Stomach (tissue), 19 donors: ENCODE measurements at regions of chr17 and their contacts with region 1.

Region 1: GRCh38 chr17:31015639-31016038 is 44.8 kb downstream of the RNF135 start:
- DNase-seq: no peak
- H3K4me3 ChIP-seq: no peak overlapping the region
- H3K27ac ChIP-seq: no peak overlapping the region
- H3K4me1 ChIP-seq: peaks cover 0 to 5% (median 0%) of the 10 kb centered on the region in 4 donors
- H3K27me3 ChIP-seq: no peaks in the 10 kb centered on the region
- CTCF ChIP-seq: no peak
- EP300 ChIP-seq: no peak
- POLR2A ChIP-seq: no peak

Region 2: GRCh38 chr17:30482555-30482954 is 533.1 kb before region 1 on chr17:
- intact Hi-C with region 1: no loop called
- DNase-seq: no peak
- H3K4me3 ChIP-seq: no peak overlapping the region
- H3K27ac ChIP-seq: no peak overlapping the region
- H3K4me1 ChIP-seq: peaks cover 6 to 28% (median 20%) of the 10 kb centered on the region in 4 donors
- H3K27me3 ChIP-seq: no peaks in the 10 kb centered on the region
- CTCF ChIP-seq: no peak
- EP300 ChIP-seq: no peak
- POLR2A ChIP-seq: no peak

Region 3: GRCh38 chr17:30970831-30971567 is 44.6 kb before region 1 on chr17 and contains the start of gene RNF135:
- intact Hi-C with region 1: no loop called
- DNase-seq: peak; percentile 85 to 93
- H3K4me3 ChIP-seq: peak within 1 kb of the TSS; percentile 57 to 82 (median 68)
- H3K27ac ChIP-seq: peak within 1 kb of the TSS; percentile 92 to 99 (median 97)
- H3K4me1 ChIP-seq: peaks cover 18 to 36% (median 24%) of the 10 kb centered on the region in 4 donors
- H3K27me3 ChIP-seq: no peaks in the 10 kb centered on the region
- CTCF ChIP-seq: peak in 4 of 7 experiments; percentile 24 to 59 (median 38)
- EP300 ChIP-seq: no peak
- POLR2A ChIP-seq: peak in 1 of 4 donors; percentile 35
- total RNA-seq, gene RNF135: 1.8 to 18.7 (median 7.0) TPM

Region 4: DNA sequence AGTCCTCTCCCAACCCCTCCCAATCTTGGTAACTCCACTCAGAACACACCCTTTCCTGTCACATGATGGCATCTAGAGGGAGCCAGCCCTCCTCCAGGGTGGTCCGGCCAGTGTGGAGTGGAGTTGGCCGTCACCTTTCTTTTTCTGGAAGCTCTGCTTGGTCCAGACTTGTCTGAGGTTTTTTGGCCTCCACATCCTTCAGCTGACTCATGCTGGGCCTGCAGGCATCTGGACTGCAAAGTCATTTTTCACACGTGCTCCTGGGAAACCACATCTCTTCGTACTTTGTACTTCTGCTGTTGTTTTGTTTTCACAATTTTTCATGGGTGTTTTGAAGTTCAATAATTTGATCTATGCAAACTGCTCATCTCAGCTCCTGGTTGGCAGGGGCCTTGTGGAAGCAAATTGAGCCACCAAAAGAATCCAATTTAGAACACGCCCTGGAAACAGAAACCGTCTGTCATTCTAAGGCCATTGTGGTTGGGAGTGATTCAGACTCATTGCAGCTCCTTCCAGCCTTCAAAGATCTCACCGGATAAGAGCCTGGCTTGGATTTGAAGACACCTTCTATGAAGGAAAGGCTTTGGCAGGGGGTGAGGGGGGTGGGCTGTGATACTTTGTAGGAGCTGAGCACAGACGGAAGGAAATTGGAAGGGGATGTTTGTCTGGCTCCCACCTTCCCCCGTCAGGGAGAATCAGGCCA is 36.7 kb after region 1 on chr17:
- intact Hi-C with region 1: no loop called
- DNase-seq: peak in 1 of 2 donors; percentile 32
- H3K4me3 ChIP-seq: no peak overlapping the region
- H3K27ac ChIP-seq: peak overlapping the region in 1 of 5 donors; percentile 42
- H3K4me1 ChIP-seq: peaks cover 0 to 15% (median 0%) of the 10 kb centered on the region in 4 donors
- H3K27me3 ChIP-seq: no peaks in the 10 kb centered on the region
- CTCF ChIP-seq: no peak
- EP300 ChIP-seq: no peak
- POLR2A ChIP-seq: no peak

Region 5: DNA sequence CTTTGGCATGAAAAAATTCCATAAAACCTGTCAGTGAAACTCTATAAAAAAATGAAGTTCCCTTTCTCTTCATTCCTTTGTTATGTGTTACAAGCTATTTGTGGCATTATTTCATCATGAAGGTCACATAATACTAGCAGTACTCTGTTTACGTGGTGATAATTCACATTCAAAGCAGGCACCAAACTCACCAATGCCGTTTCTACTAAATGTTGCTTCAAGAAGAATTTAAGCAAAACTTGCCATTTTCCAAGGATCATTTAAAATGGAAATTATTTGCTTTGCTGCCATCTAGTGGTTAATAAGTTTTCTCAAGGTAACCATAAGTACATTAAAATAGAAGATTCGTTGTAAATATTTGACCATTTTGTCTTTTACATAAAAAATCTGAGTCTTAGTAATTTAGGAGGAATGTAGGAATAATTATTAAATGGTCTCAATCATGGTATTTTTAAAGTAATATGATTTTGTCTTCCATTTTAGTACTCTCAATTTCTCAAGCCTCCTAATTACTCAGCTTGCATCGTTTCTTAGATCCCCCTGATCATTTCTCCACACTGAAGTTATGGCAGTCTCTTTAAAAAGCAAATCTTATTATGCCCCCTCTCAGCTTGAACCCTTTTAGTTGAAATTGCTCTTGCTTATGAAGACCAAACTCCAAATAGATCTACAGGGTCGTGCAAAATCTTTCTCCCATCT is 200.6 kb after region 1 on chr17:
- intact Hi-C with region 1: loop called (anchors 10 kb)
- DNase-seq: peak in 1 of 2 donors; percentile 63
- H3K4me3 ChIP-seq: no peak overlapping the region
- H3K27ac ChIP-seq: no peak overlapping the region
- H3K4me1 ChIP-seq: no peaks in the 10 kb centered on the region
- H3K27me3 ChIP-seq: no peaks in the 10 kb centered on the region
- CTCF ChIP-seq: peak in 5 of 7 experiments; percentile 23 to 63 (median 43)
- EP300 ChIP-seq: no peak
- POLR2A ChIP-seq: no peak